Heart left ventricle (tissue), 16 donors: ENCODE measurements at regions of chr5 and their contacts with region 1.

Region 1: GRCh38 chr5:163408311-163408923 is 29.0 kb upstream of the CCNG1 start:
- DNase-seq: peak in 4 of 5 donors; percentile 41 to 61 (median 49)
- ATAC-seq: peak; percentile 80 to 93 (median 87)
- H3K4me3 ChIP-seq: peak overlapping the region in 1 of 12 donors; percentile 15
- H3K27ac ChIP-seq: no peak overlapping the region
- H3K4me1 ChIP-seq: peaks cover 0 to 16% (median 0%) of the 10 kb centered on the region in 12 donors
- H3K27me3 ChIP-seq: peaks cover 0 to 4% (median 0%) of the 10 kb centered on the region in 9 donors
- CTCF ChIP-seq: peak; percentile 71 to 93 (median 88)
- POLR2A ChIP-seq: no peak

Region 2: DNA sequence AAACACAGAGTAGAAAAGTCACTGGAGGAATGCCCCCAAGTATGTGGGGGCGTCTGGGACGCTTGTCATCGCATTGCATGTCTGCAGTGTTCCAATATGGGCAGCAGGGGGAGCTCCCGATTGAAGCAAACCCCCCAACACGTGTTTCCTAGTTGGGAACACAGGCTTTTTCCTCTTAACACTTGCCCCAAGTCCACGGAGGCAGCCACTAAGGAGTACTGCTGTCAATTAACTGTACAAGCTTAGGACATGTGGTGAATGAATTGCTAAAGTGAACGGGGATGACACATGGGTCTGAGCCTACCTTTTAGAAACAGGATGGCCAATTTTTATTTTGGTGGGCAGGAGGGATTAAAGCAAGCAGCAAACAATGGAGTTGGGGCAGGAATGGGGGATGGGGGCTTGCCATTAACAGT is 1864.1 kb before region 1 on chr5:
- intact Hi-C with region 1: loop called in 2 of 10 experiments (anchors 2 to 5 kb)
- DNase-seq: peak in 1 of 5 donors; percentile 23
- ATAC-seq: no peak
- H3K4me3 ChIP-seq: no peak overlapping the region
- H3K27ac ChIP-seq: no peak overlapping the region
- H3K4me1 ChIP-seq: peaks cover 0 to 29% (median 6%) of the 10 kb centered on the region in 12 donors
- H3K27me3 ChIP-seq: peaks cover 17 to 71% (median 38%) of the 10 kb centered on the region in 9 donors
- CTCF ChIP-seq: peak; percentile 37 to 72 (median 58)
- POLR2A ChIP-seq: no peak

Region 3: DNA sequence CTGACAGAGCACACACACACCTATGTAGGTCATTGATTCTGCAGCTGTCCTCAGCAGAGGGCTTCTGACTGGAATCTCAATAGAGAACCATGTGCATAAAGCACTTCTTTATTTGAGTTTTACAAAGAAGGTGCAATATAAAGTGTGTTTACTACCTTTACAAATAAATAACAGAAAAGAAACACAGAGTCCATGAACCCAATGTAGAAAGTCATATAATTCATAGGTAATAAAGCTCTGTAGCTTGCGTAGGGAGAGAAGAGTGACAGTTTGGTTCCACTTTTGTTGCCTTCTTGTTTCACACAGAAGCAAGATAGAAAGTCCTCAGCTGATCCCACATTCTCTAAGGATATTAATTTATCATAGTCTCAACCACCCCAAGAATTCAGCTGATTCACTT is 1191.4 kb before region 1 on chr5:
- intact Hi-C with region 1: loop called in 1 of 10 experiments (anchors 10 kb)
- DNase-seq: no peak
- ATAC-seq: no peak
- H3K4me3 ChIP-seq: no peak overlapping the region
- H3K27ac ChIP-seq: no peak overlapping the region
- H3K4me1 ChIP-seq: no peaks in the 10 kb centered on the region
- H3K27me3 ChIP-seq: no peaks in the 10 kb centered on the region
- CTCF ChIP-seq: no peak
- POLR2A ChIP-seq: no peak

Region 4: GRCh38 chr5:163534492-163535094 is 126.2 kb after region 1 on chr5:
- intact Hi-C with region 1: no loop called
- DNase-seq: peak in 3 of 5 donors; percentile 11 to 44 (median 44)
- ATAC-seq: peak; percentile 71 to 88 (median 82)
- H3K4me3 ChIP-seq: no peak overlapping the region
- H3K27ac ChIP-seq: peak overlapping the region in 7 of 12 donors; percentile 7 to 58 (median 26)
- H3K4me1 ChIP-seq: peaks cover 0 to 20% (median 6%) of the 10 kb centered on the region in 12 donors
- H3K27me3 ChIP-seq: no peaks in the 10 kb centered on the region
- CTCF ChIP-seq: no peak
- POLR2A ChIP-seq: no peak

Region 5: DNA sequence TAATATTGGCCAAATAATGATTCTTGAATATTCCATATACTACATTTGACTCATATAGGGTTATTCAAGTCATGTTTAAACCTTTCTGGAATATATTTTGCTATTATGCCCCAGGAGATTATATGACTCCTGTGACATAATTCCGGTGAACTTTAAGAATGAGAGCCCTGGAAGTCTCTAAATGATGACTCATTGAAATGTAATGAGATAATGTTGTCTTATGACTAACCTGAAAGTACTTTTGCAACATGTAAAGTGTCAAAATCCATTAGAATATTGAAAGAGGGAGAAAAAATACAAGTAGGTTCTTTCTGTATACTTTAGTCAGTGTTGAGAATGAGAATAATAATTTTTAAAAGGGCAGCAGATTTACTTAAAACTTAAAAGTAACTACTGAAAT is 927.4 kb after region 1 on chr5:
- intact Hi-C with region 1: no loop called
- DNase-seq: no peak
- ATAC-seq: peak in 1 of 4 donors; percentile 61
- H3K4me3 ChIP-seq: no peak overlapping the region
- H3K27ac ChIP-seq: no peak overlapping the region
- H3K4me1 ChIP-seq: no peaks in the 10 kb centered on the region
- H3K27me3 ChIP-seq: no peaks in the 10 kb centered on the region
- CTCF ChIP-seq: no peak
- POLR2A ChIP-seq: no peak